Mammary epithelial cell (primary cell): ENCODE measurements at regions of chr5 and their contacts with region 1.

Region 1: DNA sequence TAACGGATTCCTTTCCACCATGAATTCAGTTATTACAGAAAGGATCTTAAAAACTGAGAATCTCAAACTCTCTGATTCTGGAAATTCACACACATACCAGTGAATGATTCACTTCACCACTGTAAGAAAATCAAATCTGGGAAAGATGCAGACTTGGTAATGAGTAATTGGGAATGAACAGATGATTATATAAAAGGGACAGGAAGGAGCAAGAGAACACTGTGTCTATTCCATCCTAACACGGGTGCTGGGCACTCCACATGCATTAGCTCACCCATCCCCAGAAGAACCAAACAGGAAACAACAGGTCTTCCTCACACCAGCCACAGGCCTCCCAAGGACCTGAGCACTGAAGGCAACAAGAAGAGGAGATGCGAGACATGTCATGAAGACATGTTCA is 74.8 kb upstream of the ZNF622 start:
- DNase-seq: peak; percentile 83
- H3K4me3 ChIP-seq: no peak overlapping the region
- H3K27ac ChIP-seq: peak overlapping the region; percentile 66
- H3K4me1 ChIP-seq: peaks cover 25% of the 10 kb centered on the region
- H3K27me3 ChIP-seq: no peaks in the 10 kb centered on the region
- CTCF ChIP-seq: no peak

Region 2: GRCh38 chr5:16497546-16497945 is 42.9 kb before region 1 on chr5:
- CTCF ChIA-PET with region 1: no interaction called
- dilution Hi-C with region 1: loop called (anchors 5 kb)
- in situ Hi-C with region 1: loop called in 1 of 2 experiments (anchors 5 kb)
- intact Hi-C with region 1: loop called (anchors 2 kb)
- DNase-seq: no peak
- H3K4me3 ChIP-seq: no peak overlapping the region
- H3K27ac ChIP-seq: no peak overlapping the region
- H3K4me1 ChIP-seq: peaks cover 18% of the 10 kb centered on the region
- H3K27me3 ChIP-seq: no peaks in the 10 kb centered on the region
- CTCF ChIP-seq: no peak